Upper lobe of right lung (tissue), 1 donor: ENCODE measurements at regions of chr1 and their contacts with region 1.

Region 1: GRCh38 chr1:27609210-27609555 is 5.2 kb upstream of the AHDC1 start:
- DNase-seq: no peak
- ATAC-seq: peak; percentile 13
- H3K4me3 ChIP-seq: no peak overlapping the region
- H3K27ac ChIP-seq: no peak overlapping the region
- H3K4me1 ChIP-seq: peaks cover 9% of the 10 kb centered on the region
- H3K27me3 ChIP-seq: no peaks in the 10 kb centered on the region
- CTCF ChIP-seq: no peak

Region 2: DNA sequence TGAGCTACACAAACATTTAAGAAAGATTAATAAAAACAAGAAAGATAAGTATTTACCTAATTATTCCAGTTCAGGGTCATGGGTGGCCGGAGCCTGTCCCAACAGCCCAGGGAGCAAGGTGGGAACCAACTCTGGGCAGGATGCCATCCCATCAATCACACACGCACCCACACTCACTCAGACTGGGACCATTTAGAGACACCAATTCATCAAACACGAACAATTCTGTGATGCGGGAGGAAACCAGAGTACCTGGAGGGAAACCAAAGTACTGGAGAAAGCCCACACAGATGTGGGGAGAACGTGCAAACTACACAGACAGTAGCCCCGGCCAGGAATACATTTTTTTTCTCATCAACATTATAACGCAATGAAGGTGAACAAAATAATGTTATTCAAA is 135.4 kb before region 1 on chr1:
- intact Hi-C with region 1: no loop called
- DNase-seq: no peak
- ATAC-seq: no peak
- H3K4me3 ChIP-seq: no peak overlapping the region
- H3K27ac ChIP-seq: no peak overlapping the region
- H3K4me1 ChIP-seq: peaks cover 57% of the 10 kb centered on the region
- H3K27me3 ChIP-seq: no peaks in the 10 kb centered on the region
- CTCF ChIP-seq: no peak

Region 3: GRCh38 chr1:27662707-27663393 is 53.7 kb after region 1 on chr1:
- intact Hi-C with region 1: loop called (anchors 2 kb)
- DNase-seq: peak; percentile 77
- ATAC-seq: peak; percentile 85
- H3K4me3 ChIP-seq: no peak overlapping the region
- H3K27ac ChIP-seq: peak overlapping the region; percentile 77
- H3K4me1 ChIP-seq: peaks cover 27% of the 10 kb centered on the region
- H3K27me3 ChIP-seq: no peaks in the 10 kb centered on the region
- CTCF ChIP-seq: peak; percentile 89